Common myeloid progenitor, CD34-positive (primary cell): ENCODE measurements at regions of chr6 and their contacts with region 1.

Region 1: DNA sequence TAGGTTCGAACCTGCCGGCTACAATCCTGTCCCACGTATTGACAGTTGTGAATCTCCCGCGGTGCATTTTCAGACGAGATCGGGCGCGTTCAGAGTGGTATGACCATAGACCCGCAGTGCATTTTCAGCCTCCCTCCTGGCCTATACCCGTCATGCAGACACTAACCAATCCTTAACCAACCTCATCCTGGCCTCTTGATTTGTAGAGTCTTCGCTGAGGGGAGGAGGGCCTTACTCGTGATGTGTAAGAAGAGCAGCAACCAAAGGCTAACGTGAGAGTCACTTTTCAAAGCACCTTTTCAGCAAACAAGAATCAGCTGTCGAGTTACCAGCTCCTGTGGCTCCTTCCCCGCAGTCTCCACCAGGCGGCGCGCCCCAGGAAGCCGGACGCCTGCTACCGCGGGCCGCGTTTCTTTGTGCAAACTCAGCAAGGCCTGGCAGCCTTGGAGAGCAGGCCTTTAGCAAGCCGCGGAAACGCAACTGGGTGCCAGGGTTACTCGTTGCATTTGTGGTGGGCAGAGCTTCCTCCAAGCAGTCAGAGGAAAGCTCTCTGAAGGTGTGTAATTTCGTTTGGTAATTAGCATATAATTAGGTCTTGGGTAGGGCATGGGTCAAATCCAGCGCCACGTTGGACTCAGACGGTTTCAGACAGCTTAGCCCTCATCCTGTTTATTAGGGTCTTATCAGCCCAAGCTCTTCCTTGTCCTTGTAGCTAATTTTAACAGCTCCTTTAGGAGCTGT is 139.8 kb downstream of the OR2B2 start:
- DNase-seq: peak; percentile 91 to 97 (median 94)
- H3K4me3 ChIP-seq: peak overlapping the region in 2 of 7 experiments; percentile 10 to 31
- H3K27ac ChIP-seq: peak overlapping the region in 1 of 2 experiments; percentile 80
- H3K4me1 ChIP-seq: peaks cover 2 to 36% (median 27%) of the 10 kb centered on the region in 4 experiments
- H3K27me3 ChIP-seq: no peaks in the 10 kb centered on the region

Region 2: GRCh38 chr6:27753668-27754407 is 18.6 kb before region 1 on chr6:
- CTCF ChIA-PET with region 1: interaction called, 111 read pairs
- POLR2A ChIA-PET with region 1: interaction called, 3 read pairs
- DNase-seq: peak; percentile 88 to 90 (median 89)
- H3K4me3 ChIP-seq: peak overlapping the region in 6 of 7 experiments; percentile 57 to 97 (median 78)
- H3K27ac ChIP-seq: peak overlapping the region in 1 of 2 experiments; percentile 89
- H3K4me1 ChIP-seq: peaks cover 0 to 36% (median 20%) of the 10 kb centered on the region in 4 experiments
- H3K27me3 ChIP-seq: no peaks in the 10 kb centered on the region

Region 3: GRCh38 chr6:27785294-27785693 is 12.9 kb after region 1 on chr6:
- CTCF ChIA-PET with region 1: interaction called, 34 read pairs
- POLR2A ChIA-PET with region 1: no interaction called
- DNase-seq: peak in 2 of 3 donors; percentile 49 to 73
- H3K4me3 ChIP-seq: no peak overlapping the region
- H3K27ac ChIP-seq: peak overlapping the region in 1 of 2 experiments; percentile 25
- H3K4me1 ChIP-seq: peaks cover 0 to 3% (median 0%) of the 10 kb centered on the region in 4 experiments
- H3K27me3 ChIP-seq: no peaks in the 10 kb centered on the region